ENCODE measurements at regions of chr19 and their contacts with region 1.

Region 1: DNA sequence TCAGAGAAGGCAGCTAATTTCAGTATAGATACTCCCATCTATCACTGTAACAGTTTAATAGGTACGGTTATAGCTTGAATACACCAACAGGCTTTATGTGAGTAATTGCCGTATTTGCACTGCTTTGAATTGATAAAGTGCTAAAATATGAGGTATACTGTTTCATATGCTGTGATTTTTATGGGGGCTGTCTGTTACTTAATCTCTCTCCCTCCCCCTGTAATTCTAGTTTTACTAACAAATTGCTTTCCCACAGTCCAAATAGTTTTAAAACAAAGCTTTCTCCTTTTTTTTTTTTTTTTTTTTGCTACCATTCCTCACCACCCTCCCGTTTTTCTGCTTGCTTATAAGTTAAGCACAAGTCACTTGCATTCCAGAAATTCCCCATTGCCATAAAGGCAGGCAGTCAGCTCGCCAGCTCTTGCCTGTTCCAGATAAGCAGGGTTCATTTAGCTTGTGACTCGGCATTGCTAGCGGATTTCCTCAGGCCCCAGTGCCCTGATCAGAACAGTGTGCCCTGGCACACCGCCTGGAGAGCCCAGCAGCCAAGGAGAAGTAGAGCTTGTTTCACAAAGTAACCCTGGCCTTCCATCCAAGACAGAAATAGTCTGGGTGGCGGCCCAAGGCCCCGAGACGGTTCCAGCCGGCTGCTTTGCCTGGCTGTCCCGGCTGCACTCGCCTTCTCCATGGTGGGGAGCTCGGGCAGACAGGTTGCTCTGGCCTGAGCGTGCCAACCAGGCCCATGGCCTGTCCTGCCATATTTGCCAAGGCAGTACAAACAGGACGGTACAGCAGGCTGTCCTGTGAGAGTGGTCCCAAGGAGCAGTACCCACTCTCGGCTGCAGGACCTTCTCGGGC is 43.5 kb upstream of the NPAS1 start:
- DNase-seq: peak; percentile 68 to 86
- H3K4me3 ChIP-seq: no peak overlapping the region
- H3K4me3 Mint-ChIP-seq: peak overlapping the region; percentile 56
- H3K27ac Mint-ChIP-seq: peak overlapping the region; percentile 98
- H3K4me1 ChIP-seq: peaks cover 48% of the 10 kb centered on the region
- H3K4me1 Mint-ChIP-seq: peaks cover 40% of the 10 kb centered on the region
- H3K27me3 ChIP-seq: no peaks in the 10 kb centered on the region
- H3K27me3 Mint-ChIP-seq: no peaks in the 10 kb centered on the region
- CTCF ChIP-seq: no peak

Region 2: GRCh38 chr19:46944918-46945628 is 31.1 kb before region 1 on chr19:
- CTCF ChIA-PET with region 1: no interaction called
- POLR2A ChIA-PET with region 1: no interaction called
- intact Hi-C with region 1: loop called (anchors 5 kb)
- DNase-seq: no peak
- H3K4me3 ChIP-seq: no peak overlapping the region
- H3K4me3 Mint-ChIP-seq: no peak overlapping the region
- H3K27ac Mint-ChIP-seq: peak overlapping the region; percentile 24
- H3K4me1 ChIP-seq: peaks cover 31% of the 10 kb centered on the region
- H3K4me1 Mint-ChIP-seq: peaks cover 34% of the 10 kb centered on the region
- H3K27me3 ChIP-seq: no peaks in the 10 kb centered on the region
- H3K27me3 Mint-ChIP-seq: no peaks in the 10 kb centered on the region
- CTCF ChIP-seq: no peak